ENCODE measurements at regions of chr5 and their contacts with region 1.

Region 1: DNA sequence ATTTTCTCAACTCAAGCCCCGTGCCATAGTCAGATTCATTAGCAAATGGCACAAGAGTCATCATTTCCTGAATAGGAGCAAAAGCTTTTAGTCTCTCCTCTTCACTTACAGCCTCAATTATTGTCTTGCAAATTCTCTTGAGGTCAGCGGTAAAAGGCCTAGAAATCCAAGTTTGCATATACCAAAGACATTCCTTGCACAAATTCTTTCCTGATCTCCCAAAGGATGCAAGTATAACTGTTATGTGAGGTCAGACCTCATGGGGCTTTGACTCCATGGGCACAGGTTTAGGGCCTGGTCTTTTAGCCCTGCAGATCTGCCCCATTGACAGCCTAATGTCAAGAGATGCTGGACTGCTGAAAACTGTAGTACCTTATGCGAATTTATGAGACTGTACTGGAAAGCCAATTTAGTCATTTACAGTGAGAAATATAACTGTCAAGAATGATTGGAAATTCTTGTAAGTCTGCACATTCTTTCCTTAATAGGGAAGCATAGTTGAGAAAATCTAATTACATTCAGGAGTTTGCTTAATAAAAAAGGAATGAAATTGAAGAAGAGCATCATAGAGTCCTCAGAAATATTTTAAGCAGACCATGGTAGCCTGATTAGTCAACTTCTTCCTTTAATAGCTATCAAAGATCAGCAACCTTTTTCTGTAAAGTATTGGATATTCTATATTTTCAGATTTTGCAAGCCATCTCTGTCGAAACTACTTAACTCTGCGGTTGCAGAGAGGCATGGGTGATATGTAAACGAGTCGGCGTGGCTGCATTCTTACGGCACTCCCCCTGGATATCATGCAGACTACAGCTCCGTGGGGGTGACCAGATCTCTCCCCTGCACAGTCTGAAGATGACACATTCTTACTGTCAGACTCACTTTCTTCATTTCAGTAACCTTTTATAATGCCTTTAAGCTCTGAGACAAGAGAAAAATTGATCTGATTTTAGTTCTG is 45.2 kb downstream of the GCNT4 start:
- DNase-seq: no peak
- H3K4me3 Mint-ChIP-seq: no peak overlapping the region
- H3K27ac Mint-ChIP-seq: no peak overlapping the region
- H3K4me1 Mint-ChIP-seq: no peaks in the 10 kb centered on the region
- H3K27me3 Mint-ChIP-seq: no peaks in the 10 kb centered on the region

Region 2: GRCh38 chr5:74988273-74988983 is 18.7 kb before region 1 on chr5:
- intact Hi-C with region 1: loop called (anchors 1 kb)
- DNase-seq: no peak
- H3K4me3 Mint-ChIP-seq: no peak overlapping the region
- H3K27ac Mint-ChIP-seq: no peak overlapping the region
- H3K4me1 Mint-ChIP-seq: no peaks in the 10 kb centered on the region
- H3K27me3 Mint-ChIP-seq: no peaks in the 10 kb centered on the region

Region 3: GRCh38 chr5:75037135-75037534 is 30.0 kb after region 1 on chr5:
- intact Hi-C with region 1: no loop called
- DNase-seq: no peak
- H3K4me3 Mint-ChIP-seq: no peak overlapping the region
- H3K27ac Mint-ChIP-seq: no peak overlapping the region
- H3K4me1 Mint-ChIP-seq: peaks cover 19% of the 10 kb centered on the region
- H3K27me3 Mint-ChIP-seq: no peaks in the 10 kb centered on the region

Measured in activated CD4-positive, alpha-beta T cell treated with anti-CD3 and anti-CD28 coated beads, Interleukin-2, amount 10 ng/mL, durations not matched to agents 24 days and 14 days (primary cell).